GM12878 (cell line): ENCODE measurements at regions of chr10 and their contacts with region 1.

Region 1: GRCh38 chr10:63157845-63158624 is 24.9 kb downstream of the NRBF2 start:
- DNase-seq: peak; percentile 49
- ATAC-seq: peak; percentile 89
- H3K4me3 ChIP-seq: no peak overlapping the region
- H3K27ac ChIP-seq: 0 out of 2 replicates have a peak overlapping the region, but pooled peaks have one; percentile 31
- H3K4me1 ChIP-seq: peaks cover 3% of the 10 kb centered on the region; the same call in 1 of the 2 replicates
- H3K27me3 ChIP-seq: no peaks in the 10 kb centered on the region
- CTCF ChIP-seq: peak; percentile 70 to 86 (median 74); a peak in 5 of 6 replicates
- EP300 ChIP-seq: no peak
- POLR2A ChIP-seq: no peak
- RAD21 ChIP-seq: peak; percentile 97

Region 2: DNA sequence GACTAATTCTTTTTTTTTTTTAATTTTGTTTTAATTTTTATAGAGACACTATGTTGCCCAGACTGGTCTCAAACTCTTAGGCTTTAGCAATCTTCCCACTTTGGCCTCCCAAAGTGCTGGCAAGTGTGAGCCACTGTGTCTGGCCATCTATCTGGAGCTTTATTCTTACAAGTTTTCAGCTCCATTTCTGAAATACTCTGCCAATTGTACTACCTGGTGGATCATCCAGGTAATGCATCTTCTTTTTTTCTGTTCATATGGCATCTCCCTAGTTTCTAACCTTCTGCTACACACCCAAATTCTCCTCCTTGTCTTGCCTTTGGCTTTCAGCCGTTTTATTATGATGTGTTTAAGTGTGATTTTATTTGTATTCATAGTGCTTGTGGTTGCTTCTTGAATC is 743.7 kb before region 1 on chr10:
- CTCF ChIA-PET with region 1: no interaction called
- POLR2A ChIA-PET with region 1: no interaction called
- RAD21 ChIA-PET with region 1: no interaction called
- SMC1A ChIA-PET with region 1: no interaction called
- in situ Hi-C with region 1: no loop called
- intact Hi-C with region 1: no loop called
- DNase-seq: no peak
- ATAC-seq: no peak
- H3K4me3 ChIP-seq: no peak overlapping the region
- H3K27ac ChIP-seq: no peak overlapping the region
- H3K4me1 ChIP-seq: no peaks in the 10 kb centered on the region
- H3K27me3 ChIP-seq: no peaks in the 10 kb centered on the region
- CTCF ChIP-seq: no peak
- EP300 ChIP-seq: no peak
- POLR2A ChIP-seq: no peak
- RAD21 ChIP-seq: no peak

Region 3: GRCh38 chr10:62437696-62438095 is 720.3 kb before region 1 on chr10:
- CTCF ChIA-PET with region 1: interaction called, 49 read pairs
- POLR2A ChIA-PET with region 1: no interaction called
- RAD21 ChIA-PET with region 1: interaction called, 26 read pairs
- SMC1A ChIA-PET with region 1: interaction called, 23 read pairs
- in situ Hi-C with region 1: no loop called
- intact Hi-C with region 1: loop called (anchors 2 kb)
- DNase-seq: no peak
- ATAC-seq: peak; percentile 81
- H3K4me3 ChIP-seq: no peak overlapping the region
- H3K27ac ChIP-seq: no peak overlapping the region
- H3K4me1 ChIP-seq: peaks cover 6% of the 10 kb centered on the region; the same call in 1 of the 2 replicates
- H3K27me3 ChIP-seq: no peaks in the 10 kb centered on the region; a peak in 1 of 4 replicates
- CTCF ChIP-seq: peak; percentile 54 to 77 (median 68); a peak in 5 of 6 replicates
- EP300 ChIP-seq: no peak
- POLR2A ChIP-seq: no peak
- RAD21 ChIP-seq: peak; percentile 94

Region 4: DNA sequence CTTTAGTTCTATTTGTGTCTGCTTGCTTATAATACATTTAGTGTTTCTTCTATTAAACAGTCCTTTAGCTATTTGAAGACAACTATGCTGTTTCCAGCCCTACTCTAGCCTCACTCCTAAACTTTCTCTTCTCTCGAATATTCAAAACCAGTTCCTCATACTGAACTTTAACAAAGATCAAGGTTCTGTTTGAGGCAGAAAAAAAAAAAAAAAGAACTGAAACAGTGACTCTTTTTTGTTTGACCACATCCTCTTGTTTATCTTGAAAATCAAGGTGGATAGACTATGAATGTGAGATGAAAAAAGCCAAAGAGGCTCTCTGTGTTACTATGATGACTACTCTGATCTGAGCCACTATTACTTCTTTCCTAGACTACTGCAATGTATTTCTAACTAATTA is 629.6 kb before region 1 on chr10:
- CTCF ChIA-PET with region 1: interaction called, 3 read pairs
- POLR2A ChIA-PET with region 1: no interaction called
- RAD21 ChIA-PET with region 1: no interaction called
- SMC1A ChIA-PET with region 1: interaction called, 10 read pairs
- in situ Hi-C with region 1: no loop called
- intact Hi-C with region 1: no loop called
- DNase-seq: peak; percentile 79
- ATAC-seq: peak; percentile 91
- H3K4me3 ChIP-seq: no peak overlapping the region
- H3K27ac ChIP-seq: peak overlapping the region; percentile 91
- H3K4me1 ChIP-seq: peaks cover 32% of the 10 kb centered on the region
- H3K27me3 ChIP-seq: no peaks in the 10 kb centered on the region
- CTCF ChIP-seq: no peak
- EP300 ChIP-seq: peak; percentile 81 to 89
- POLR2A ChIP-seq: no peak
- RAD21 ChIP-seq: peak; percentile 23; the same call in 1 of the 2 replicates

Region 5: GRCh38 chr10:62594093-62594520 is 563.9 kb before region 1 on chr10:
- CTCF ChIA-PET with region 1: interaction called, 54 read pairs
- POLR2A ChIA-PET with region 1: no interaction called
- RAD21 ChIA-PET with region 1: interaction called, 47 read pairs
- SMC1A ChIA-PET with region 1: interaction called, 39 read pairs
- in situ Hi-C with region 1: loop called (anchors 5 kb)
- intact Hi-C with region 1: loop called (anchors 1 kb)
- DNase-seq: peak; percentile 30
- ATAC-seq: peak; percentile 94
- H3K4me3 ChIP-seq: no peak overlapping the region
- H3K27ac ChIP-seq: no peak overlapping the region
- H3K4me1 ChIP-seq: peaks cover 7% of the 10 kb centered on the region
- H3K27me3 ChIP-seq: no peaks in the 10 kb centered on the region
- CTCF ChIP-seq: peak; percentile 90 to 97 (median 95)
- EP300 ChIP-seq: no peak
- POLR2A ChIP-seq: no peak
- RAD21 ChIP-seq: peak; percentile 100

Region 6: DNA sequence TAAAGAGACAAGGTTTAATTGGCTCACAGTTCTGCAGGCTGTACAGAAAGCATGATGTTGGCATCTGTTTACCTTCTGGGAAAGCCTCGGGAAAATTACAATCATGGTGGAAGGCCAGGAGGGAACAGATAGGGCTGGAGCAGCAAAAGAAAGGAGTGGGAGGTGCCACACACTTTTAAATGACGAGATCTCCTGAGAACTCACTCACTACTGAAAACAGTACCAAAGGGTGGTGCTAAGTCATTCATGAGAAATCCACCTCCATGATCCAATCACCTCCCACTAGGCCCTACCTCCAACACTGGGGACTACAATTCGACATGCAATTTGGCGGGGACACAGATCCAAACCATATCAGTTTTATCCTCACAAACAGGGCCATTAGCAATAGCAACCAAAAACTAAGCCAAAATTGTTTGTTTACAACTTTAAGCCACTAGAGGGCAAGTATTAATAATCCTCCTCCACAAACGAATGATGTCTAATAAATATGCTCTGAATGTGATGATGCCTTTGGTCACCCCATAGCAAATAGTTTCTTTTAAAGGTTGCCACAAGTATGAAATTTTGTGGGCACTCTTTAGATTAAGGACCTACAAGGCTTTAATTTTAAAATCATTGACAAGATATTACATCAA is 154.1 kb before region 1 on chr10:
- CTCF ChIA-PET with region 1: interaction called, 6 read pairs
- POLR2A ChIA-PET with region 1: no interaction called
- RAD21 ChIA-PET with region 1: interaction called, 5 read pairs
- SMC1A ChIA-PET with region 1: interaction called, 11 read pairs
- in situ Hi-C with region 1: no loop called
- intact Hi-C with region 1: loop called (anchors 5 kb)
- DNase-seq: no peak
- ATAC-seq: peak; percentile 64; the same call in 2 of the 3 replicates
- H3K4me3 ChIP-seq: no peak overlapping the region
- H3K27ac ChIP-seq: no peak overlapping the region
- H3K4me1 ChIP-seq: no peaks in the 10 kb centered on the region
- H3K27me3 ChIP-seq: peaks cover 0 to 3% of the 10 kb centered on the region in 2 experiments; a peak in 1 of 4 replicates
- CTCF ChIP-seq: peak; percentile 28 to 53 (median 30); a peak in 4 of 6 replicates
- EP300 ChIP-seq: no peak
- POLR2A ChIP-seq: no peak
- RAD21 ChIP-seq: peak; percentile 38

Region 7: DNA sequence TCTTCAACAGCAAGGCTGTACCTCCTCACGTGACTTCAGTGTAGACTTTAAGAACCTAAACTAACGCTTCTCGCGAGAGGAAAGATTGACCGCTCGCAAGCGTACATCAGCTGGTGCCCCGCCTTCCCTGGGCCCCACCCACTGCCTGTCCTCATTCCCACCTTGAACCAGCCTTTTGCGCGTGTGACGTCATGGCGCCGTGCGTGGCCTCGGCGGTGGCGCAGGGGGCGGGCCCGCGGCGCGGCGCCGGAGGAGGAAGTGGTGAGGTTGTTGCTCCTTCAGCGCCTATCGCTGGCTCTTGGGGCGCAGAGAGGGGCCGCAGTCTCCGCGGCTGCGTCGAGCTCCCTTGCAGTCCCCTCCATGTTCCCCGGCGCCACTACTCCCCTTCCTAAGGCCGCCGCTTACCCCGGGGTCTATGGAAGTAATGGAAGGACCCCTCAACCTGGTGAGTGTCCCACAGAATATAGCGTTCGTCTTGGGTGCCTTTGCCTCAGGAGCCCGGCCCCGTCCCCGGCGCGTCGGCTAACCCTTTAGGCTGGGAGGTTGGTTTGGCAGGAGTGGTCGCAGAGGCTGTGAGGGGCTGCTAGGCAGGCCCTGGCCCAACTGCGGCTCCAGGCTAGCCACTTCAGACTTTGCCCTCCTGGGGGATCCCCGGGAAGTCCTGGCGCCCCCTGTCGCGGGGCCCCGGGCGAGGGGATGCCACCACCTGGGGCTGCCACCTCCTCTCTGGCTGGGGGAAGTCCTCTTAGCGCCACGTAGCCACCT is 24.8 kb before region 1 on chr10 and contains the start of gene NRBF2:
- CTCF ChIA-PET with region 1: interaction called, 71 read pairs
- POLR2A ChIA-PET with region 1: interaction called, 8 read pairs
- RAD21 ChIA-PET with region 1: interaction called, 13 read pairs
- SMC1A ChIA-PET with region 1: interaction called, 53 read pairs
- in situ Hi-C with region 1: no loop called
- intact Hi-C with region 1: no loop called
- DNase-seq: peak; percentile 96
- ATAC-seq: peak; percentile 93
- H3K4me3 ChIP-seq: peak within 1 kb of the TSS; percentile 89
- H3K27ac ChIP-seq: peak within 1 kb of the TSS; percentile 94
- H3K4me1 ChIP-seq: peaks cover 6% of the 10 kb centered on the region
- H3K27me3 ChIP-seq: no peaks in the 10 kb centered on the region
- CTCF ChIP-seq: peak in 2 of 3 experiments; percentile 32 to 42; a peak in 3 of 6 replicates
- EP300 ChIP-seq: no peak
- POLR2A ChIP-seq: peak; percentile 99
- RAD21 ChIP-seq: no peak
- polyA plus RNA-seq, gene NRBF2: 33.2 to 35.0 TPM

Region 8: GRCh38 chr10:63145782-63146181 is 12.3 kb before region 1 on chr10:
- CTCF ChIA-PET with region 1: interaction called, 57 read pairs
- POLR2A ChIA-PET with region 1: interaction called, 4 read pairs
- RAD21 ChIA-PET with region 1: interaction called, 24 read pairs
- SMC1A ChIA-PET with region 1: interaction called, 30 read pairs
- in situ Hi-C with region 1: no loop called
- intact Hi-C with region 1: no loop called
- DNase-seq: no peak
- ATAC-seq: peak; percentile 80
- H3K4me3 ChIP-seq: no peak overlapping the region
- H3K27ac ChIP-seq: no peak overlapping the region
- H3K4me1 ChIP-seq: no peaks in the 10 kb centered on the region; the same call in 1 of the 2 replicates
- H3K27me3 ChIP-seq: no peaks in the 10 kb centered on the region
- CTCF ChIP-seq: no peak
- EP300 ChIP-seq: no peak
- POLR2A ChIP-seq: no peak
- RAD21 ChIP-seq: no peak